Head of caudate nucleus (tissue), 42 donors: ENCODE measurements at regions of chr2 and their contacts with region 1.

Region 1: DNA sequence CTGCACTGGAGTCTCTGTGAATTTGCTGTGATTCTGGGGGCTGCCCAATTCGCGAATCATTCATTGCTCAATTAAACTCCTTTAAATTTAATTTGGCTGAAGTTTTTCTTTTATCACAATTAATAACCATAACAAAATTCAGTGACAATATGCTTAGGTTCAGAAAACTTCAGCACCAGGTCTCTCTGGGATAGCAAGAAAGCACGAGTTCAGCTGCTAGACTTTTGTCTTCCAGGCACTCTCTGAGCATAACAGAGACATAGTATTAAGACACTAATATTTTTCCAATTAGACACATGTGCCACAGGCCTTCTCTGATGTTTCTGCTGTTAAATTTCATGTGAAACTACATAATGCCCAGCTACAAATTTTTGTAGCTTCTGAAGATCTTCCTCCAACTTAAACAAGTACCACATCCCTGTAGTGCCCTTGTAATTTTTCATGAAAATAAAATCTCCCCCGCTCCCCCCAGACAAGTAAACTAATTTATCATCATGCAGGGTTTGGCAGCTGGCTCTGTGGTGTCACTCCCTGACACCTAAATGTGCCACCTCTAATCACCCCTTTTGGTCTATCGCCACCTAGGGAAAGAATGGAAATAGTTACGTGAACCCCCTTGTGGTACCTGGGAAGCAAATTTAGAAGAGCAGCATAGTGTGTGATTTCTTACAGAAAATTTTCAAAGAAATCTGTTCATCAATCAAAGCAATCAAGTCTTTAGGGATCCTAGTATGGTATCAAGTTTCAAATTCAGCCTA is 94.1 kb downstream of the CSRNP3 start:
- DNase-seq: no peak

Region 2: DNA sequence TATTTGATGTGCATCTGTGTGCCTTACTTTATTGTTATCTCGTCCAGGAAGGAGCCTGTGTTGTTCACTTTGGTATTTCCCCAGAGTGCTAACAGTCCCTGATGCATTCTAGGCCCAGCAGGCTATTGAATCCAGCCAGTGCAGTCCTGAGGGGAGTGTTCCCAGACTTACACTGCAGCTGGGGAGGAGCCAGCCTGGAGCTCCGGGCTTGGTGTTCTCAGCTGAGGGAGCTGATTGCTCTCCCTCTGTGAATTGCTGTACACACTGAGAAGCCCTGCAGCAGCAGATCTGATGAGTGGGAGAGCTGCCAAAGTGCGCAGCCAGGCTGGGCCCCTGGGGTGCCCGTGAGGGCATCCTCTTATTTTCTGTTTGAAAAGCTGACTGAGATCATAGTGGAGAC is 71.2 kb after region 1 on chr2:
- intact Hi-C with region 1: loop called (anchors 10 kb)
- DNase-seq: peak; percentile 62 to 95 (median 87)

Region 3: GRCh38 chr2:166017208-166017607 is 453.6 kb after region 1 on chr2:
- intact Hi-C with region 1: no loop called
- DNase-seq: no peak